Panc1 (cell line): ENCODE measurements at regions of chr5 and their contacts with region 1.

Region 1: DNA sequence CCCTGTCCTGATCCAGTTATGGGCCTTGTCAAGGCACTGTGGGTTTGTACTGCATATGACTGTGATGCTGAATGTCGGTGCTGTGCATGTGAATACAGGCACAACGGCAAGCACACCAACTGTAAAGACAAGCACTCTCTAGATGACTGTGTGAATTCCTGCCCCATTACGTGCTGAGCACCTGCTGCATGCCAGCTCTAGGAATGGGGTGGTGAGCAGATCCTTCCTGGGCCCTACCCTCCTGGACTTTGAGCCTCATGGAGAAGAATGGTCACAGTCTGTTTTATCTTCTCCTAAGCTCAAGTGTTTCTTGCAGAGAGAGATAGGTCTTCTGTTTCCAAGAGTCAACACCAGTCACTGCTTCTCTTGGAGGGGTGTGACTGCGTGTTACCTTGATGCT is 56.0 kb upstream of the RARS1 start:
- DNase-seq: no peak
- ATAC-seq: no peak
- H3K4me3 ChIP-seq: no peak overlapping the region
- H3K27ac ChIP-seq: no peak overlapping the region
- H3K4me1 ChIP-seq: no peaks in the 10 kb centered on the region
- H3K27me3 ChIP-seq: no peaks in the 10 kb centered on the region
- CTCF ChIP-seq: no peak

Region 2: DNA sequence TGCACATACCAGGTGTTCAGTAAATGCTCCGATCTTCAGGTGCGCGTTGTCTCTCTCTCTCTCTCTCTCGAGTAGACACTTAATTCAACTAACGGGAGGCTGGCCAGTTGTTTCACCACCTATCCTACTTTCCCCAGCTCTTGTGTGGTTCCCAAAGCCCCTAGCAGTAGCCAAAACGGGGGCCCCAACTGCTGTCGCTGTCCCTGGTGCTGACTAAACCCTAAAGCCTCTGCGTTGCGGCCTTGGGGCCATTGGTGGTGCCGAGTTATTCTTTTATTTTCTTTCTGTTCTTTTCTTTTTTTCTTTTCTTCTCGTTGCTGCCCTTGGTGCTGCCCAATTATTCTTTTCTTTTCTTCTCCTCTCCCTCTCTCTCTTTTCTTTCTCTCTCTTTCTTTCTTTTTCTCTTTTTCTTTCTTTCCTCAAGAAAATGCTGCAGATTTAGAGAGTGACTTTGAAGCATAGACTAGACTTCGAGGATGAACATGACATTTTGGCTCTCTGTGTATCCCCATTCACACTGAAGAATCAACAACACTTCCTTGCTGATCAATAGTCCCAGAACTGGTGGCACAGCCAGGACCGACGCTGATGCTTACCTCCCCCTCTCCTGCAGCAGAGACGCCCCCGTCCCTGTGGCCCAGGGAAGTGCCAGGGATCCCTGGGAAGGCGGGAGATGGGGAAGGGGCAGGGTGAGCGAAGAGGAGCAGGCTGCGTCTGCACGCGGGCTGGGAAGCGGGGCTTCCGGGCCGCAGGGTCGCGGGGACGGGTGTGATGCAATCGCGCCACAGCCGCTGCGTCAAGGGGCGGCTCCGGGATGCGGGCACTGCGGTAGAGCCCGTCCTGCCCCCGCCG is 98.5 kb after region 1 on chr5 and contains the start of gene FBLL1:
- CTCF ChIA-PET with region 1: no interaction called
- POLR2A ChIA-PET with region 1: interaction called, 10 read pairs
- in situ Hi-C with region 1: no loop called
- intact Hi-C with region 1: no loop called
- DNase-seq: no peak
- ATAC-seq: peak; percentile 87
- H3K4me3 ChIP-seq: peak within 1 kb of the TSS; percentile 42 to 61
- H3K27ac ChIP-seq: peak within 1 kb of the TSS; percentile 74; the same call in 1 of the 2 replicates
- H3K4me1 ChIP-seq: no peaks in the 10 kb centered on the region
- H3K27me3 ChIP-seq: no peaks in the 10 kb centered on the region
- CTCF ChIP-seq: no peak
- total RNA-seq, gene FBLL1: 7.5 TPM